ENCODE measurements at regions of chr13 and their contacts with region 1.

Region 1: GRCh38 chr13:107211073-107211472 is 643.1 kb upstream of the ARGLU1 start:
- DNase-seq: peak; percentile 56 to 65
- ATAC-seq: peak; percentile 72 to 91 (median 88)
- H3K4me3 ChIP-seq: peak overlapping the region in 5 of 10 donors; percentile 28 to 42 (median 31)
- H3K27ac ChIP-seq: no peak overlapping the region
- H3K4me1 ChIP-seq: peaks cover 0 to 43% (median 13%) of the 10 kb centered on the region in 9 donors
- H3K27me3 ChIP-seq: no peaks in the 10 kb centered on the region
- CTCF ChIP-seq: peak; percentile 76 to 93 (median 90)

Region 2: GRCh38 chr13:106835477-106835876 is 375.6 kb before region 1 on chr13:
- intact Hi-C with region 1: no loop called
- DNase-seq: no peak
- ATAC-seq: peak in 2 of 8 donors; percentile 21 to 64
- H3K4me3 ChIP-seq: no peak overlapping the region
- H3K27ac ChIP-seq: peak overlapping the region in 2 of 10 donors; percentile 1 to 25
- H3K4me1 ChIP-seq: peaks cover 0 to 21% (median 0%) of the 10 kb centered on the region in 9 donors
- H3K27me3 ChIP-seq: no peaks in the 10 kb centered on the region
- CTCF ChIP-seq: no peak

Region 3: GRCh38 chr13:107642831-107643230 is 431.8 kb after region 1 on chr13:
- intact Hi-C with region 1: loop called in 2 of 10 experiments (anchors 5 to 10 kb)
- DNase-seq: no peak
- ATAC-seq: no peak
- H3K4me3 ChIP-seq: no peak overlapping the region
- H3K27ac ChIP-seq: no peak overlapping the region
- H3K4me1 ChIP-seq: no peaks in the 10 kb centered on the region
- H3K27me3 ChIP-seq: no peaks in the 10 kb centered on the region
- CTCF ChIP-seq: no peak

Region 4: DNA sequence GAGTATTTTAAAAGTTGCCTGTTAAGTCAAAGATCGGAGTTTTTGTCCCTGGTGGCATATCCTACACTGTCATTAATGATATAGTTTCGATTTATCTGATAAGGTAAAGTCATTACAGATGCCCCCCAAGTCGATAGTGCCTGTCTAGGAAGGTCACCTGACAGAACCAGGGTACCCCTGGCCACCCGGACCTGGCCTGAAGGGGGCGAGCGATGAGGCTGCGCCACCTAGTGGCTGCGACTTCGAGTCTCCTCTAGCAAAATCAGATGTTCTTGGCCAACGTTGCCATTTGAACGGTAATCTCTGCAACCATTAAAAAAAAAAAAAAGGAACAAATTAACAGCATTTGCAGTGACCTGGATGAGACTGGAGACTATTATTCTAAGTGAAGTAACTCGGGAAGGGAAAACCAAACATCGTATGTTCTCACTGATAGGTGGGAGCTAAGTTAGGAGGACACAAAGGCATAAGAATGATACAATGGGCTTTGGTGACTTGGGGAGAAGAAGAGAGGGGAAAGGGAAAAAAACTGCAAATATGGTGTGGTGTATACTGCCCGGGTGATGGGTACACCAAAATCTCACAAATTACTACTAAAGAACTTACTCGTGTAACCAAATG is 439.1 kb after region 1 on chr13:
- intact Hi-C with region 1: loop called in 9 of 10 experiments (anchors 2 to 10 kb)
- DNase-seq: peak; percentile 19 to 43
- ATAC-seq: peak in 2 of 8 donors; percentile 40 to 41
- H3K4me3 ChIP-seq: no peak overlapping the region
- H3K27ac ChIP-seq: no peak overlapping the region
- H3K4me1 ChIP-seq: no peaks in the 10 kb centered on the region
- H3K27me3 ChIP-seq: peaks cover 0 to 12% (median 0%) of the 10 kb centered on the region in 7 donors
- CTCF ChIP-seq: peak; percentile 34 to 82 (median 64)

Region 5: GRCh38 chr13:107867701-107868661 is 656.9 kb after region 1 on chr13:
- intact Hi-C with region 1: loop called in 1 of 10 experiments (anchors 10 kb)
- DNase-seq: peak in 1 of 2 donors; percentile 6
- ATAC-seq: peak in 4 of 8 donors; percentile 33 to 61 (median 48)
- H3K4me3 ChIP-seq: peak overlapping the region in 9 of 10 donors; percentile 22 to 52 (median 48)
- H3K27ac ChIP-seq: no peak overlapping the region
- H3K4me1 ChIP-seq: peaks cover 0 to 24% (median 15%) of the 10 kb centered on the region in 9 donors
- H3K27me3 ChIP-seq: peaks cover 5 to 90% (median 70%) of the 10 kb centered on the region in 7 donors
- CTCF ChIP-seq: peak in 4 of 9 donors; percentile 20 to 49 (median 32)

Region 6: GRCh38 chr13:108155185-108156106 is 944.4 kb after region 1 on chr13:
- intact Hi-C with region 1: loop called (anchors 2 to 5 kb)
- DNase-seq: peak; percentile 39 to 50
- ATAC-seq: no peak
- H3K4me3 ChIP-seq: no peak overlapping the region
- H3K27ac ChIP-seq: no peak overlapping the region
- H3K4me1 ChIP-seq: peaks cover 0 to 3% (median 0%) of the 10 kb centered on the region in 9 donors
- H3K27me3 ChIP-seq: no peaks in the 10 kb centered on the region
- CTCF ChIP-seq: peak; percentile 77 to 93 (median 89)